ENCODE measurements at regions of chr6 and their contacts with region 1.

Region 1: DNA sequence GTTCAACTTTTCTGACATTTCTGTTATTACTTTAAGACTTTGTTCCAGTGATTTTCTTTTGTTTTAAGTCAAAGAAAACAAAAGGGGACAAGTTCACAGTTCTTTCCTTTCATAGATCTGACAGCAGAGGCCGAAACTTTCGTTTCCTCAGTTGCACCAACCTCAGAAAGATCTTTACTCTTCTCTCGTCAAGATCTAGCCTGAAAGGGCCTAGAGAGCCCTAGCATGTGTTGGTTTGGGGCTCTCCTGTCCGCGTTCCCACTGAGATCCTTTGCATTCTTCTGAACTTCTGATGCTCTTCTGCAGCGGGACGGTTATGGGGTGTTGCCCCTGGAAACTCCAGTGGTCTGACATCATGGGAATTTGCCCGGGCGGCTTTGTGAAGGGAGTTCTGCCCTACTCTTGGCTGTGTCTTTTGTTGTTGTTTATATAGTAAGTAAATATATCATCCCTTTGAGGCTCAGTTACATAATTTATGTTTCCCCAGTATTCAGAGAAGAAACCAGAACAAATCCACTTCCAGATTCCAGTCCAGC is 129.1 kb downstream of the SASH1 start:
- DNase-seq: no peak
- ATAC-seq: peak; percentile 18
- H3K4me3 ChIP-seq: no peak overlapping the region
- H3K27ac ChIP-seq: peak overlapping the region; percentile 45 to 68 (median 62)
- H3K4me1 ChIP-seq: peaks cover 0 to 3% of the 10 kb centered on the region in 2 donors
- H3K27me3 ChIP-seq: no peaks in the 10 kb centered on the region
- CTCF ChIP-seq: no peak
- POLR2A ChIP-seq: no peak

Region 2: GRCh38 chr6:148520109-148520841 is 48.6 kb after region 1 on chr6:
- in situ Hi-C with region 1: no loop called
- intact Hi-C with region 1: loop called (anchors 10 kb)
- DNase-seq: no peak
- ATAC-seq: no peak
- H3K4me3 ChIP-seq: no peak overlapping the region
- H3K27ac ChIP-seq: peak overlapping the region; percentile 66 to 84 (median 76)
- H3K4me1 ChIP-seq: peaks cover 23 to 55% of the 10 kb centered on the region in 2 donors
- H3K27me3 ChIP-seq: no peaks in the 10 kb centered on the region
- CTCF ChIP-seq: no peak
- POLR2A ChIP-seq: no peak